MCF 10A (cell line): ENCODE measurements at regions of chr5 and their contacts with region 1.

Region 1: GRCh38 chr5:43008369-43009153 is 31.6 kb downstream of the ANXA2R start:
- DNase-seq: peak; percentile 82
- H3K4me3 Mint-ChIP-seq: peak overlapping the region; percentile 76
- H3K27ac Mint-ChIP-seq: peak overlapping the region; percentile 94
- H3K4me1 Mint-ChIP-seq: peaks cover 17% of the 10 kb centered on the region
- H3K27me3 Mint-ChIP-seq: no peaks in the 10 kb centered on the region
- CTCF ChIP-seq: no peak

Region 2: DNA sequence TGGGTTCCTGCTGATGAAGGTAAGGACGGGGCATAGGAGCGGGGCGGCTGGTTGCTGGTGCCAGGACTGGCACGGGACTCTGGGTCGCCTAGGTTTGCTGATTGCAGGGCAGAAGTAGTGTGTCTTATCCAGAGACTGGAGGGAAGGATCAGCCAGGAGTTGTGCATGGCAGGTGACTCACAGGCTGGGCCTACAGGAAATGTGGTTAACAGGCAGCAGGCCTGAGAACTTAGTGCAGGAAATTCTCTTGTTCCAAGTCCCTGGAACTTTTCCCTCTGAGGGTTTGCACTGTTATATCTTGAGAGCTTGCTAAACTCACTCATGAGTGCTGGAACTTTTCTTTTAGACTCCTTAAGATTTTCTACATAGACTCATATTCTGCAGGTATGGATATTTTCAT is 63.6 kb before region 1 on chr5:
- CTCF ChIA-PET with region 1: interaction called, 3 read pairs
- POLR2A ChIA-PET with region 1: interaction called, 6 read pairs
- intact Hi-C with region 1: loop called (anchors 1 kb)
- DNase-seq: peak; percentile 89
- H3K4me3 Mint-ChIP-seq: no peak overlapping the region
- H3K27ac Mint-ChIP-seq: peak overlapping the region; percentile 54
- H3K4me1 Mint-ChIP-seq: peaks cover 8% of the 10 kb centered on the region
- H3K27me3 Mint-ChIP-seq: no peaks in the 10 kb centered on the region
- CTCF ChIP-seq: no peak

Region 3: DNA sequence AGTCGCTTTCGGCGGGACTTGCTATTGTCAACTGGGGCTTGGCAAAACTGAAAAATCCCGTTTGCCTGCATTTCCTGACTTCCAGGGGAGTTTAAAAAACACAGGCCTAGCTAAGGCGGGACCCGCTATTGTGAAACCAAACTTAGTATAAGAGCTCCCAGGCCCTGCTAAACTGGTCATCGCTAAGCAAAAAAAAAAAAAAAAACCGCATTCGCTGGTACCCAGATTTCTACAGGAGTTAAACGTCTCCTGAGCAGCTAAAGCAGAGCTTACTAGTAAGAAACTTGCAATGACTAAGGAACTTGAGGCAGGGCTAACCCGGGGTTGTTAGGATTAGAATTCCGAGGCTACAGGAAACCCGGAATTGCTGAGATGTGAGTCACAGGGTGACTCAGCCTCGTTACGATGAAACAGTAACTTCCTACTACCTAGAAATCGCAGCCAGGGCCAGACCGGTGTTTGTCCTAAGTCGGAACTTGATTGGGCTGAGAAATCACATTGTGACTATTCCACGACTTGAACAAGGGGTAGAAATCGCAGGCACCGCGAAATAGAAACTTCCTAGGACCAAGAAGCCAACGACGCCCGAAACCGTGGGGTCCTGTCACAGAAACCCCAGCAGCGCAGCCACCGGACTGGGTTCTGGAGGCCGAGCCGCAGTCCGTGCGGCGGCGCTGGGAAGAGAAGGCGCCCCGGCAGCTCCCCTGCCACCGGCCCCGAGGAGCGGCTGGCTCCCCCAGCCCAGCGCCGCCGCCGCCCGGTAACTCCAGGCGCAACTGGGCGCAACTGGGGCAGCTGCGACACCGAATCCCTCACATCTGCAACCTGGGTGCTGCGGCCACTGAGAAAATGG is 57.9 kb before region 1 on chr5:
- CTCF ChIA-PET with region 1: interaction called, 3 read pairs
- POLR2A ChIA-PET with region 1: interaction called, 6 read pairs
- intact Hi-C with region 1: loop called (anchors 1 kb)
- DNase-seq: peak; percentile 98
- H3K4me3 Mint-ChIP-seq: peak overlapping the region; percentile 47
- H3K27ac Mint-ChIP-seq: peak overlapping the region; percentile 85
- H3K4me1 Mint-ChIP-seq: no peaks in the 10 kb centered on the region
- H3K27me3 Mint-ChIP-seq: no peaks in the 10 kb centered on the region
- CTCF ChIP-seq: no peak

Region 4: GRCh38 chr5:42985129-42986037 is 23.2 kb before region 1 on chr5:
- CTCF ChIA-PET with region 1: no interaction called
- POLR2A ChIA-PET with region 1: interaction called, 24 read pairs
- intact Hi-C with region 1: no loop called
- DNase-seq: peak; percentile 66
- H3K4me3 Mint-ChIP-seq: no peak overlapping the region
- H3K27ac Mint-ChIP-seq: peak overlapping the region; percentile 89
- H3K4me1 Mint-ChIP-seq: peaks cover 20% of the 10 kb centered on the region
- H3K27me3 Mint-ChIP-seq: no peaks in the 10 kb centered on the region
- CTCF ChIP-seq: no peak

Region 5: DNA sequence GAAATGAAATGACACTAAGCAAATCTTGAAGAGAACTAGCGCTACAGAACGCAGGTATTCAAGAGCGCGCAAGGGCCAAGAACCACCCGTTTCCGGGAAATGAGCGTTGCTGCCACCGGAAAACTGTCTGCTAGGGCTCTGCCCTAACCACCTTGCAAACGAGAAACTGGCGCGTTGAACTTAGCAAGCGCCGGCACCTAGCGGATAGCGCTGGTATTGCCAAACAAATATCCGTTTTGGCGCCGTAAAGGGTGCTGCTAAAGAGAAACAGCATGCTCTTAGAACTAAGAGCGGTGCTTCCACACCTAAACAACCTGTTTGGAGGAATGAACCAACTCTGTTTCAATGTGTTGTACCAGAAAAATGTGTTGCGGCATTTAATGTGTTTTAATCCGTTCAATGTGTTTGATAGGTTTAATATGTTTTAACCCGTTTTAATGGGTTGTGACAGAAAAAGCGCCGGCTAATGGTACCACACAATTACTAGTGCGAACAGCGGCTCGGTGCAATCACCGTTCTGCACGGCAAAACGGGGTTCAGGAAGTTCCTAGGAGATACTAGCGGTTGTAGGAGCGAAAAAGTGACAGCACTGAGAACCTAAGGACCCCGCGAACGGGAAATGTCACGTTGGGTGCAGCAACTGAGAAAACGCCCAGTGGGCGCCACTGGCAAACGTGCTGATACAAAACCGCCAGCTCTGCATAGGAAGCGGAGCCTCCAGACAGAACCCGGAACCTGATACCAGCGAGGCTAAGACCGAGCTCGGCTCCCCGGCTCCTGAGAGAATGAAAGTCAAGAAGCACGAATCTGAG is 31.9 kb after region 1 on chr5 and contains the start of gene ANXA2R:
- CTCF ChIA-PET with region 1: interaction called, 5 read pairs
- POLR2A ChIA-PET with region 1: interaction called, 62 read pairs
- intact Hi-C with region 1: loop called (anchors 2 kb)
- DNase-seq: no peak
- H3K4me3 Mint-ChIP-seq: peak within 1 kb of the TSS; percentile 88
- H3K27ac Mint-ChIP-seq: peak within 1 kb of the TSS; percentile 95
- H3K4me1 Mint-ChIP-seq: no peaks in the 10 kb centered on the region
- H3K27me3 Mint-ChIP-seq: no peaks in the 10 kb centered on the region
- CTCF ChIP-seq: no peak
- total RNA-seq, gene ANXA2R: 0.98 and 1.3 TPM in 2 replicates

Region 6: DNA sequence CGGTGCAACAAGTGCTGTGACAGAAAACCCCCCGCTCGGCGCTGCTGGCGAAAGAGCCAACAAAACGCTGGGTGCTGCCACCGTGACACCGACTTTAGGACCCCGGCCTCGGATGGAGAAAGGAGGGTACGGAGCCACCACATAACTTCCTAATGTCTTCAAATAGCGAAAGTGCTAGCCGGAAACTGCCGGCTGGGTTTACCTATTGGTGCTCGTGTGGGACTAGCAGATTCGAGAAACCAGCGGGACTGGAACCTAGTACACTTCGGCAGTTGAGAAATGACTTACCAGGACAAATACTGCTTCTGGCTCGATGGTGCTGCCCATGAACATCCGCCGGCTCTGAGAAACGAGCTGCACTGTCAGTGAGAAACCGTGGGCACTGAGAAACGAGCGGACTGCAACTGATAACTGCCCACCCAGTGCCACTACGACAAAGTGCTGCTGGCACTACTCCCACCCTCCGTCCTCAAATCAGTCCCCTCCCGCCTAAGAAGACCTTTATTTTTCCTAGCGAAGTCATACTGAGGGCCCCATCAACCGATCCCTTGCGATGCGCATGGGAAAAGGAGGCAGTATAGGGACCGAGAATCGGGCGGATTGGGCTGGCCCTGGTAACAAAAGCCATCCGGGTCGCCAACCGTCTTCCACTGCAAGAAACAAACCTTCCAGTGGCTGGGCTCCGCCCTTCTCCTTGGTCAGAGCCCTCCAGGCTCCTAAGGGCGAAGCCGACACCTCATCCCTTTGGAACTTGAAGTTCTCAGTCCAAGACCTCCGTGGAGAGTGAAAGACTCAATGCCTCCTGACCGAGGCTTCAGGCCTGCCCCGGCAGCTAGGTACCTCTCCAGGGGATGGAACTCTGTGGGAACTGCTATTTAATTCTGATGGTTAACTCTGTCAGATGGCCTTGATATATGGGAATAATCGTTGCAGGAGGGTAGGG is 58.5 kb after region 1 on chr5:
- CTCF ChIA-PET with region 1: interaction called, 6 read pairs
- POLR2A ChIA-PET with region 1: interaction called, 108 read pairs
- intact Hi-C with region 1: loop called (anchors 1 kb)
- DNase-seq: peak; percentile 91
- H3K4me3 Mint-ChIP-seq: peak overlapping the region; percentile 99
- H3K27ac Mint-ChIP-seq: peak overlapping the region; percentile 93
- H3K4me1 Mint-ChIP-seq: peaks cover 12% of the 10 kb centered on the region
- H3K27me3 Mint-ChIP-seq: no peaks in the 10 kb centered on the region
- CTCF ChIP-seq: no peak